Panc1 (cell line): ENCODE measurements at regions of chr12 and their contacts with region 1.

Region 1: DNA sequence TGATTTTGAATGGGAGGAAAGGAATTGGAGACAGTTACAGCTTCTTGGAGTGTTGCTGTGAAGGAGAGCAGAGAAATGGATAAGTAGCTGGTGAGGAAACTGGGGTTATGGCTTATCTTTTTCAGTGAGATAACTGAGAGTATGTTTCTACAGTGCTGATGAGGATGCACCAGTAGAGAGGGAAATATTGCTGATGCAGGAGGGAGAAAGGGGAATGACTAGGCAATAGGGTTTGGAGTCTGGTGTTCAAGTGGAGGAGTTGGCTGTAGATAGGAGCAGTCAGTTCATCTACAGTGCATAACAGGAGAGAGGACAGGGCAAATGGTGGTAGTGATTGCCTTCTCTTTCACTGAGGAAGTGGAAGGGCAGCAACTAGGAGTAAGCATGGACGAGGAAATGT is 33.0 kb downstream of the SPATS2 start:
- DNase-seq: no peak
- ATAC-seq: no peak
- H3K4me3 ChIP-seq: no peak overlapping the region
- H3K27ac ChIP-seq: no peak overlapping the region
- H3K4me1 ChIP-seq: no peaks in the 10 kb centered on the region
- H3K27me3 ChIP-seq: no peaks in the 10 kb centered on the region
- CTCF ChIP-seq: no peak

Region 2: DNA sequence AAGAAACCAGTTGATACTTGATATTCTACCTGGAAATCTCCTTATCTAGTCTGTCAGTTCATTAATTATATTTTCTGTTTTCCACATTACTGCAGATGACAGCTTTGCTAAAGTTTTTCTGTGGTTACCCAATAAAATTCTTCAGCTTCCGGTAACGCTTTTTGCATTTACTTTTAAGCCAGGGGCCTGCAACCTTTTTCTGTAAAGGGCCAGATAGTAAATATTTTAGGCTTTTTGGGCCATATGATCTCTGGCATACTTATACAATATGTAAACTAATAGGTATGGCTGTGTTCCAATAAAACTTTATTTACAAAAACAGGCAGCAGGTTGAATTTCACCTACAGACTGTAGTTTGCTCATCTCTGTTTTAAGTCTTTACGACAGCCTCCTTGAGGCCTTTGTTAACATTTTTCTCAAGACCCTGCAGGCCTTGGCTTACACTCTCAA is 15.2 kb after region 1 on chr12:
- CTCF ChIA-PET with region 1: no interaction called
- POLR2A ChIA-PET with region 1: interaction called, 10 read pairs
- in situ Hi-C with region 1: no loop called
- intact Hi-C with region 1: no loop called
- DNase-seq: no peak
- ATAC-seq: no peak
- H3K4me3 ChIP-seq: no peak overlapping the region
- H3K27ac ChIP-seq: no peak overlapping the region
- H3K4me1 ChIP-seq: no peaks in the 10 kb centered on the region
- H3K27me3 ChIP-seq: no peaks in the 10 kb centered on the region
- CTCF ChIP-seq: no peak

Region 3: DNA sequence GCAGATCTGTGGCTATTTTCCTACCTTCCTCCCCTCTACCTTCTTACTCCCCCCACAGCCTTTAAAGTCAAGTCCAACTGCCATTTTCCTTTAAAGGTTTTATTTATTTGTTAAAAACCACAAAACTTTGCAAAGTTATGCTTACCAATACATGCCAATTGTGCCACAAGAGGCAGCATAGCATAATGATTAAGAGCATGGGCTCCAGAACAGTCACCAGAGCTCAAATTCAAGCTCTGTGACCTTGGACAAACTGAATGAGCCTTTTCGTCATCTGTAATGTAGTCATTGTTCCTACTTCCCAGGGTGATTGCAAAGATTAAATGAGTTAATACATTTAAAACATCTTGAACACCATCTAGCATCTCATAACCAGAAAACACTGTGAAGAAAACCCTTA is 319.9 kb after region 1 on chr12:
- CTCF ChIA-PET with region 1: no interaction called
- POLR2A ChIA-PET with region 1: no interaction called
- in situ Hi-C with region 1: no loop called
- intact Hi-C with region 1: no loop called
- DNase-seq: no peak
- ATAC-seq: peak; percentile 58; the same call in 1 of the 2 replicates
- H3K4me3 ChIP-seq: no peak overlapping the region
- H3K27ac ChIP-seq: no peak overlapping the region
- H3K4me1 ChIP-seq: no peaks in the 10 kb centered on the region
- H3K27me3 ChIP-seq: peaks cover 2% of the 10 kb centered on the region; the same call in 1 of the 2 replicates
- CTCF ChIP-seq: peak; percentile 26; the same call in 1 of the 2 replicates